ENCODE measurements at regions of chr1 and their contacts with region 1.

Region 1: DNA sequence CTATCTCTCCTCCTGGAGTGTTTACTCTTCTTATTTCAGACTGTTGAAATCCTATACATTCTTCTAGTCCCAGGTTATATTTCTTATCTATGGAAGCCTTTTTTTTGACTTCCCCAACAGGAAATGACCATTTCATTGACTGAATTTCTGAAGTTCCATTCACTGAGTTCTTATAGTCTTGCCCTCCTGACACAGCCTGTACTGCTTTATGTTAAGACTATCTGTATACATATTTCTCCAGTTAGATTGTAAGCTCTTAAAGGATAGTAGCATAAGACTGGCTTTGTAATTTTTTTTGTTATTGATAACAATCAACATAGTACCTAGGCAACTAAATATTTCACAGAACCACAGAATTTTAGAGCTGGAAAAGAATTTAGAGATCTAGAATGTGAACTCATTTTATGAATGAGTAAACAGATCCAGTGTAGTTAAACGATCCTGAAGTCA is 14.9 kb upstream of the MACF1 start:
- DNase-seq: no peak
- H3K4me3 ChIP-seq: no peak overlapping the region
- H3K27ac ChIP-seq: peak overlapping the region; percentile 59 to 90
- H3K4me1 ChIP-seq: peaks cover 15 to 36% of the 10 kb centered on the region in 2 donors
- H3K27me3 ChIP-seq: no peaks in the 10 kb centered on the region
- CTCF ChIP-seq: no peak

Region 2: DNA sequence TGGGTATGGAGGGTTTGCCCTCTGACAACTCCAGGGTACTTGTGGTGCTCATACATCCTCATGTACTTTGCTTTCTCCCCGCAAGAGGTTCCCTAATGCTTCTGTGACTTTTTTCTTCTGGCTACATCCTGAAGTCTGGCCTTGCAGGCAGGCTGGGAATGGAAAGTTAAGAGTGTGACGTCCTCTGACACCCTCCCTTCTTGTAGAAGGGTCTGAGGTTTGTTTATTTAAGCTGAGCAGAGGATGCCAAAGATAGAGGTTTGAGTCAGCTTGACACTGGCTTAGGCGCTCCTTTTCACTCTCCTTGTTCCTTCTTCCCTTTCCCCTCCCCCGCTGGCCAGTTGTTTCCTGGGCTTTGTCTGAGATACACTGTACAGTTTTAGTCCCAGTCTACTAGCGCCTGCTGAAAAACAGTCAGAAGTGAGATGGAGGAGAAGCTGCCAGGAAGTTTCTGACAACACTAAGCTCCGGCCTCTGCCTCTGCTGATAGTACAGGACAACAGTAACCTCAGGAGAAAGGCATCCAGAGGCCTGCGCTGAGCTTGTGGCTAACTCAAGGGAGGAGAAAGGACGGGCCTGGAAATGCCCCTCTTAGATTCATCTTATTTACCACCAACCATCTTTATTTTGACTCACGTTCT is 14.9 kb after region 1 on chr1 and contains the start of gene MACF1:
- intact Hi-C with region 1: loop called (anchors 2 kb)
- DNase-seq: peak; percentile 55 to 90
- H3K4me3 ChIP-seq: peak within 1 kb of the TSS; percentile 40 to 69
- H3K27ac ChIP-seq: peak within 1 kb of the TSS; percentile 82 to 93
- H3K4me1 ChIP-seq: peaks cover 0 to 23% of the 10 kb centered on the region in 2 donors
- H3K27me3 ChIP-seq: no peaks in the 10 kb centered on the region
- CTCF ChIP-seq: peak; percentile 63 to 76 (median 67)
- total RNA-seq, gene MACF1: 279 TPM